Activated B cell treated with CpG ODN at 0.5 μM for 24 hours (primary cell): ENCODE measurements at regions of chr3 and their contacts with region 1.

Region 1: DNA sequence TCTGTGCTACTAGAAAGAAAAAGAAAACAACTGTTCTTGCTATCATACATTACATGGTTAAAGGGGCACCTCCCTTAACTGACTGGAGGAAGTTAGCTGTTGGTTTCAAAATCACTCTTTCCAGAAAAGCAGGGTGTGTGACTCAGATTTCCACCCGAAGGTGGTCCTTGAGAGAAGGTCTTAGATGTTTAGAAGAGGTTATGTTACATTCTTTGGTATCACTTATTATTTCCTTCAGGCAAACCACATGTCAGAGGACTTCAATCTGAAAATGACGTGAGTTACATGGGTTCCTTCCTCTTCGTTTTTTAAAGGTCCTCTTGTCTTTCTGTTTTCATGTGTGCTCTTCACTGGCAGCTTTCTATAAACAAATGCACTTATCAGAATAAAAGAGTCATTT is 307.9 kb upstream of the CBLB start:
- DNase-seq: no peak
- ATAC-seq: peak; percentile 77
- H3K4me3 Mint-ChIP-seq: peak overlapping the region; percentile 60
- H3K27ac Mint-ChIP-seq: peak overlapping the region; percentile 81
- H3K4me1 Mint-ChIP-seq: peaks cover 38% of the 10 kb centered on the region
- H3K27me3 Mint-ChIP-seq: no peaks in the 10 kb centered on the region
- CTCF ChIP-seq: no peak

Region 2: DNA sequence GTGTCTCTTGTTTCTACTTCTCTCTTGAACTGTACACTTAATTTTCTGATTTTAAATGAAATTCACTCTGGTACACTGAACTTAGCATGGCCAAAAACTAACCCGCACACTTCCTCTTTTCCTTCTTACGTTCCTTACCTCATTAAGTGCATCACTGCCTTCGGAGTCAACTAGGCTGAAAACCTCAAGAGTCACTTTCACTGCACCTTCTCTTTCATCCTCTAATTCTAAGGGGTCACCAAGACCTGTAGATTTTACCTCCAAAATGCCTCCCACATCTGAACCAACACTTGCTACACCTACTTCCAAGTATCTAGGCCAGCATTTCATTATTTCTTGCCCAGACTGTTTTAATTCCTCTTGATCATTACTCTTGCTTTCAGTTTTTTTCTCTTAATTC is 314.5 kb before region 1 on chr3:
- CTCF ChIA-PET with region 1: no interaction called
- POLR2A ChIA-PET with region 1: no interaction called
- intact Hi-C with region 1: loop called (anchors 2 kb)
- DNase-seq: no peak
- ATAC-seq: peak; percentile 94
- H3K4me3 Mint-ChIP-seq: no peak overlapping the region
- H3K27ac Mint-ChIP-seq: no peak overlapping the region
- H3K4me1 Mint-ChIP-seq: peaks cover 50% of the 10 kb centered on the region
- H3K27me3 Mint-ChIP-seq: no peaks in the 10 kb centered on the region
- CTCF ChIP-seq: no peak

Region 3: GRCh38 chr3:106191211-106191610 is 14.5 kb after region 1 on chr3:
- CTCF ChIA-PET with region 1: no interaction called
- POLR2A ChIA-PET with region 1: no interaction called
- intact Hi-C with region 1: loop called (anchors 2 kb)
- DNase-seq: no peak
- ATAC-seq: no peak
- H3K4me3 Mint-ChIP-seq: no peak overlapping the region
- H3K27ac Mint-ChIP-seq: no peak overlapping the region
- H3K4me1 Mint-ChIP-seq: peaks cover 1% of the 10 kb centered on the region
- H3K27me3 Mint-ChIP-seq: peaks cover 4% of the 10 kb centered on the region
- CTCF ChIP-seq: no peak